Naive thymus-derived CD4-positive, alpha-beta T cell (primary cell): ENCODE measurements at regions of chr6 and their contacts with region 1.

Region 1: GRCh38 chr6:5665173-5665572 is 341.6 kb downstream of the NRN1 start:
- DNase-seq: peak in 7 of 9 donors; percentile 25 to 75 (median 60)
- ATAC-seq: peak; percentile 84
- H3K4me3 ChIP-seq: peak overlapping the region; percentile 4
- H3K4me3 Mint-ChIP-seq: peak overlapping the region; percentile 41 to 81 (median 74)
- H3K27ac ChIP-seq: peak overlapping the region; percentile 45
- H3K27ac Mint-ChIP-seq: peak overlapping the region; percentile 75 to 98 (median 90)
- H3K4me1 ChIP-seq: peaks cover 0 to 56% of the 10 kb centered on the region in 2 donors
- H3K4me1 Mint-ChIP-seq: peaks cover 24 to 90% (median 84%) of the 10 kb centered on the region in 7 donors
- H3K27me3 ChIP-seq: no peaks in the 10 kb centered on the region
- H3K27me3 Mint-ChIP-seq: no peaks in the 10 kb centered on the region

Region 2: DNA sequence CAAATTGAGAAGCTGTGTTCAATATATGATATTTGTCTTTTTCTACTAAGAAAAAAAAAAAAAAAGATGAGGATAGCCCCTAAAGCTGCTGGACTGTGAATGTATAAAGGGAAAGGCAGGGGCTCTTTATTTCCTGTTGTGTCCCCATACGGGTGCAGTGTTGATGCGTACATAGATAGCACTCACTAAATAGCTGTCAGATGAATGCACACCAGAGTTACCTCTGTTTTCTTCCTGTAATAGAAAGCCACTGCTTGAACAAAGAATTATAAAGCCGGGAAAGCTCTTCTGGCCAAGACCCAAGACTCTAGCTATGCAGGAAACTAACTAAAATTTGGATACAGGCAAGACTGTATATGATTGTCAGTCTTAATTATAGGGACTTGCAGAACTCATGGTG is 143.9 kb before region 1 on chr6:
- CTCF ChIA-PET with region 1: no interaction called
- POLR2A ChIA-PET with region 1: interaction called, 6 read pairs
- intact Hi-C with region 1: loop called in 1 of 2 experiments (anchors 2 kb)
- DNase-seq: peak in 1 of 9 donors; percentile 7
- ATAC-seq: no peak
- H3K4me3 ChIP-seq: no peak overlapping the region
- H3K4me3 Mint-ChIP-seq: peak overlapping the region in 6 of 10 donors; percentile 10 to 53 (median 36)
- H3K27ac ChIP-seq: peak overlapping the region; percentile 24
- H3K27ac Mint-ChIP-seq: peak overlapping the region in 5 of 9 donors; percentile 28 to 66 (median 60)
- H3K4me1 ChIP-seq: peaks cover 26 to 27% of the 10 kb centered on the region in 2 donors
- H3K4me1 Mint-ChIP-seq: peaks cover 34 to 69% (median 43%) of the 10 kb centered on the region in 7 donors
- H3K27me3 ChIP-seq: no peaks in the 10 kb centered on the region
- H3K27me3 Mint-ChIP-seq: no peaks in the 10 kb centered on the region

Region 3: GRCh38 chr6:5566718-5567117 is 98.5 kb before region 1 on chr6:
- CTCF ChIA-PET with region 1: no interaction called
- POLR2A ChIA-PET with region 1: no interaction called
- intact Hi-C with region 1: no loop called
- DNase-seq: no peak
- ATAC-seq: no peak
- H3K4me3 ChIP-seq: no peak overlapping the region
- H3K4me3 Mint-ChIP-seq: no peak overlapping the region
- H3K27ac ChIP-seq: no peak overlapping the region
- H3K27ac Mint-ChIP-seq: no peak overlapping the region
- H3K4me1 ChIP-seq: no peaks in the 10 kb centered on the region
- H3K4me1 Mint-ChIP-seq: peaks cover 1 to 30% (median 9%) of the 10 kb centered on the region in 7 donors
- H3K27me3 ChIP-seq: no peaks in the 10 kb centered on the region
- H3K27me3 Mint-ChIP-seq: no peaks in the 10 kb centered on the region

Region 4: GRCh38 chr6:5619249-5619648 is 45.9 kb before region 1 on chr6:
- CTCF ChIA-PET with region 1: interaction called, 4 read pairs
- POLR2A ChIA-PET with region 1: interaction called, 7 read pairs
- intact Hi-C with region 1: loop called in 1 of 2 experiments (anchors 2 kb)
- DNase-seq: peak in 8 of 9 donors; percentile 15 to 56 (median 37)
- ATAC-seq: peak; percentile 87
- H3K4me3 ChIP-seq: peak overlapping the region; percentile 24
- H3K4me3 Mint-ChIP-seq: peak overlapping the region; percentile 27 to 68 (median 56)
- H3K27ac ChIP-seq: peak overlapping the region; percentile 33
- H3K27ac Mint-ChIP-seq: peak overlapping the region; percentile 66 to 92 (median 88)
- H3K4me1 ChIP-seq: peaks cover 11 to 18% of the 10 kb centered on the region in 2 donors
- H3K4me1 Mint-ChIP-seq: peaks cover 16 to 47% (median 37%) of the 10 kb centered on the region in 7 donors
- H3K27me3 ChIP-seq: no peaks in the 10 kb centered on the region
- H3K27me3 Mint-ChIP-seq: no peaks in the 10 kb centered on the region

Region 5: DNA sequence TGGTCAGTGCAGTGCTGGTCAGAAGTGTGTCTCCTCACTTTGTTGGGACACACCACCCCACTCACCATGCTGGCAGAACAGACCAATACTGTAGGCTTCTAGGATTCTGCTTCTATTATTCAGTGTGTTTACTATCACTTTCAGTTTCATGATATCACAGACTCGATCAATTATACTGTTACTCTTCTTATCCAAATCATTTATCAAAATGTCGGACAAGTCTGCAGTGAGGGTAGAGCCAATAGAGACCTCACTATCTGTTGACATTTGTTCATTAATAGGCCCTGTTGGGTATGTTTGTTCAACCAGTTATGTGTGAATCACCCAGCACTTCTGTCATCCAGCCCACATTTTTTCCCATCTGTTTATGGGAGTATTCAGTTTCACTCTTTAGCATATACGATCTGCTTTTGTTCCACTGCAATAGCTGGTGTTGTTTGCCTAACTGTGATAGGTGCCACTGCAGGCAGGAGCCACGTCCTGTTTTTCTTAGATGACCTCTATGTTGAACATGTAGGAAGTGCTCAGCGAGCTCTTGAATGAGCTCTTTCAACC is 201.5 kb after region 1 on chr6:
- CTCF ChIA-PET with region 1: no interaction called
- POLR2A ChIA-PET with region 1: interaction called, 3 read pairs
- intact Hi-C with region 1: loop called in 1 of 2 experiments (anchors 5 kb)
- DNase-seq: peak in 6 of 9 donors; percentile 16 to 42 (median 32)
- ATAC-seq: peak; percentile 76
- H3K4me3 ChIP-seq: peak overlapping the region; percentile 36
- H3K4me3 Mint-ChIP-seq: peak overlapping the region; percentile 69 to 86 (median 80)
- H3K27ac ChIP-seq: peak overlapping the region; percentile 70
- H3K27ac Mint-ChIP-seq: peak overlapping the region; percentile 91 to 100 (median 98)
- H3K4me1 ChIP-seq: peaks cover 31 to 44% of the 10 kb centered on the region in 2 donors
- H3K4me1 Mint-ChIP-seq: peaks cover 30 to 66% (median 59%) of the 10 kb centered on the region in 7 donors
- H3K27me3 ChIP-seq: no peaks in the 10 kb centered on the region
- H3K27me3 Mint-ChIP-seq: no peaks in the 10 kb centered on the region